ENCODE measurements at regions of chr1 and their contacts with region 1.

Region 1: DNA sequence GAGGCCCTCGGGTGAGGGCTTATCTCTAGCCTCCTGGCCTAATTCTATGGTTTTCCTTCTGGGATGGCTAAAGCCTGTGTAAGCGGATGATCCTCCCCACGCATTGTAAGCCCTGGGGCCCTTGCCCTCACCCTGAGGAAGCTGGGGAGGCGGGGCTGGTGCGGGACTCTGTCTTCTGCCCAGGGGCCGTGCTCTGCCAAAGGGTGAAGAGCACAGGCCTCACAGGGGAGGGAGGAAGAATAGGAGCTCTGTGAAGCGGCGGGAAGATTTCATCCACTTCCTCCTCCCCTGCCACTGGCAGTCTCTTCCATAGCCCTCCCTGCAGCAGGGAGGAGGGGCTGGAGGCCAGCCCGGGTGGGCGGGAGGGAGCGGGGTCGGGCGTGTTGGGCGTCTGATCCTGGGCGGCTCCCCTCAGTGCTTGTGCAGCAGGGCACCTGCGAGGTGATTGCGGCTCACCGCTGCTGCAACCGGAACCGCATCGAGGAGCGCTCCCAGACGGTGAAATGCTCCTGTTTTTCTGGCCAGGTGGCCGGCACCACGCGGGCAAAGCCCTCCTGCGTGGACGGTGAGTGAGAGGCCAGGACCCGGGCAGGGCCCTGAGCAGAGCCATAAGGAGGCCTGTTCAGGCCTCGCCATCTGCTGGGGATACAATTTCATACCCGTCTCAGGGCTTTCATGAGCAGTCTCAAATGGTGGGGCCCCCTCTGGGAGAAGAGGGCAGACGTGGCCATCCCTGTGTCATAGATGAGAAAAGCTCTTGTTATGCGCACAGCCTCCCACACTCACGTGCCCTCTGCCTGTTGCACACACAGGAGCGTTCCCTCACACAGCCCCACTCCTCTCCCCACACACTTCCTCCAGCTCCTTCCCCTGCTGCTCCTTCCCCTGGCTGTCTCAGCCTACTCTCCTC is 7.7 kb upstream of the PPM1J start:
- DNase-seq: no peak
- H3K4me3 ChIP-seq: peak overlapping the region in 2 of 4 donors; percentile 9 to 23
- H3K27ac ChIP-seq: no peak overlapping the region
- H3K4me1 ChIP-seq: peaks cover 0 to 20% (median 14%) of the 10 kb centered on the region in 4 donors
- H3K27me3 ChIP-seq: no peaks in the 10 kb centered on the region
- CTCF ChIP-seq: no peak
- EP300 ChIP-seq: no peak
- POLR2A ChIP-seq: no peak

Region 2: DNA sequence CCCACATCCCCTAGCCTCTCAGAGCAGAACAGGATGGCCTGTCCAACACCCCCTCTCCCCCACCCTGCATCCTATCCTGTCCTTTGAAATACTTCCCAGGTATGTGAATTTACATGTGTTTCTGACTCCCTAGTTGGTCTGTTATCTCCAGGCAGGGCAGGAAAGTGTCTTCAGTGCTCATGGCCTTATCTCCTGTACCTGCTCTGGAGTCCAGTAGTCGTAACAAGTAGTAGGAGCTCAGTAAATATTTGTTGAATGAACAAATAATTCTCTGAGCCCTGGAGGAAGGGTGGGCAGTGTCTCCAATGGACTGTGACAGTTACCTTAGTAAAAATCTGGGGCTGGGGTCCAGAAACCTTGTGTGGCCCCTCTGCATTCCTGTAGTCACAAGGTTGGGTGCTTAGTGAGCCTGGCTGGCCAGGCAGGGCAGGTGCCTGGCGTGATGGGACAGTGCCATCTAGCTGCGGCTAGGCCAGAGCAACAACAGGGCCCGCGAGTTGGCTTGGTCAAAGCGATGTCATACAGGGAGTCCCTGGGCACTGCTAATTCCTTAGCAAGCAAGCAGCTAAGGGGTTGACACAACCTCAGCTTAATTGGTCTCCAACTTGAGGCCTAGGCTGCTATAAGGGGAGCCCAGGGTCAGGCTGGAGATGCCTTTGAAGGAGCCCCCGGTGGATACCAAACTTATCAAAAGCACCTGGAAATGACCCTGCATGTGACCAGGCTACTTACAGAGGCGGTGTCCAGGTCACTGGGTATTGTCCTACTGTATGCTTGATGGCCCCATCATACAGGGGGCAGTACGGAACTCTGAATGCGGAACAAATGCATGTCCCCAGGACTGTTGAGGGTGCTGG is 81.3 kb after region 1 on chr1:
- in situ Hi-C with region 1: loop called in 2 of 4 experiments (anchors 5 to 10 kb)
- intact Hi-C with region 1: loop called (anchors 5 kb)
- DNase-seq: peak; percentile 79
- H3K4me3 ChIP-seq: no peak overlapping the region
- H3K27ac ChIP-seq: no peak overlapping the region
- H3K4me1 ChIP-seq: peaks cover 0 to 2% (median 0%) of the 10 kb centered on the region in 4 donors
- H3K27me3 ChIP-seq: no peaks in the 10 kb centered on the region
- CTCF ChIP-seq: peak; percentile 49 to 78 (median 67)
- EP300 ChIP-seq: no peak
- POLR2A ChIP-seq: no peak

Region 3: DNA sequence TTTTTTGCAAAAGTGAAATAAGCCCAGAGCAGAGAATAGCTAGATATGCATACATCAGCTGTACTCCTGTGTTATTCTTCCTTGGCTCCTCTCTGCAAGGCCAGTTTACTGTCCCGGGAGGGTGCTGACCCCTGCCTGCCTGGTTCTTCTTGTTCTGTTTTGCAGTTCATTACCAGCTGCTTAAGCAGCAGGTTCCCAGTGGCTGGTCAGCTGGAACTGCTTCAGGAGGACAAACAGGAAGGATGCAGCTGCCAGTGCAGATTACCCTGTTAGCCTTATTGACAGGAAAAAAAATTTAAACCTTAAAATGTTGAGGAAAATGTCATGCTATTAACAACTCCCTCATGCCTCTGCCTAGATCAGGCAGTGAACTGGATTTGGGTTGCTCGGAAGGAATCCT is 334.1 kb after region 1 on chr1:
- in situ Hi-C with region 1: loop called in 2 of 4 experiments (anchors 10 to 25 kb)
- intact Hi-C with region 1: no loop called
- DNase-seq: peak; percentile 21
- H3K4me3 ChIP-seq: no peak overlapping the region
- H3K27ac ChIP-seq: peak overlapping the region in 3 of 4 donors; percentile 55 to 70 (median 64)
- H3K4me1 ChIP-seq: peaks cover 0 to 52% (median 22%) of the 10 kb centered on the region in 4 donors
- H3K27me3 ChIP-seq: no peaks in the 10 kb centered on the region
- CTCF ChIP-seq: no peak
- EP300 ChIP-seq: no peak
- POLR2A ChIP-seq: no peak

Region 4: DNA sequence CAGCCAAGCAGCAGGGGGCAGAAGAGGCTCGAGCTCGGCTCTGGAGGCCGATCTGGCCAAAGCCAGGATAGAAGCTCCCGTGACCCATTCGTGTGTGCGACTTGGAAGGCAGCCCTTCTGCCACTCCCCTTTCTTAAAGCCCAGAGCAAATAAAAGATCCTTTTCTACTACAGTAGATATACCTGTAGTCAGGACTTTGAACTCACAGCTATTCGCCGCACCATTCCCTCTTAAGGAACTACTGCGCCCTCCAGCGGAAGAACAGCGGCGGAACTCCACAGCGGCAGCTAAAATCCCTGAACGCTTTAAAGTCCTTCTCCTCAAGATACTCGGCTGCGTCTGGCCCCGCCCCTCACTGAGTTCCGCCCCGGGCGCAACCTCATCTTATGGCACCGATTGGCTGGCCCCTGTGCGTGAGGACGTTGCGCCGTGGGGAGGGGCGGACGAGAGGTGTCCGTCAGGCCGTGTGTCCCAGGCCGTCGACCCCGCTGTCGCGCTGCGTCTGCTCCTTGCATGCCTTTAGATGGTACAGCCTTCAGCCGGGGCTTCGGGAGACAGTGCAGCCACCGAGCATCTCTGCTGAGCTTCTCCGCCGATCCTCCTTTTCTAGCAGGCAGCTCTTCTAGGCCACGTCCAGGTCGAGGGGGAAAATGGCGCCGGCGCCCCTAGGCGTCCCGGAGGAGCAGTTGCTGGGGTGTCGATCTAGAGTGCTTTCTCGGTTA is 350.1 kb after region 1 on chr1 and contains the start of gene LRIG2:
- in situ Hi-C with region 1: loop called in 2 of 4 experiments (anchors 10 to 25 kb)
- intact Hi-C with region 1: loop called (anchors 10 kb)
- DNase-seq: peak; percentile 100
- H3K4me3 ChIP-seq: peak within 1 kb of the TSS; percentile 72 to 82 (median 77)
- H3K27ac ChIP-seq: peak within 1 kb of the TSS; percentile 93 to 97 (median 96)
- H3K4me1 ChIP-seq: peaks cover 0 to 32% (median 22%) of the 10 kb centered on the region in 4 donors
- H3K27me3 ChIP-seq: no peaks in the 10 kb centered on the region
- CTCF ChIP-seq: peak in 4 of 5 experiments; percentile 76 to 95 (median 88)
- EP300 ChIP-seq: no peak
- POLR2A ChIP-seq: peak; percentile 93
- total RNA-seq, gene LRIG2: 9.4 to 43.7 (median 27.2) TPM

Measured in transverse colon (tissue), 4 donors.